ENCODE measurements at regions of chr16 and their contacts with region 1.

Region 1: DNA sequence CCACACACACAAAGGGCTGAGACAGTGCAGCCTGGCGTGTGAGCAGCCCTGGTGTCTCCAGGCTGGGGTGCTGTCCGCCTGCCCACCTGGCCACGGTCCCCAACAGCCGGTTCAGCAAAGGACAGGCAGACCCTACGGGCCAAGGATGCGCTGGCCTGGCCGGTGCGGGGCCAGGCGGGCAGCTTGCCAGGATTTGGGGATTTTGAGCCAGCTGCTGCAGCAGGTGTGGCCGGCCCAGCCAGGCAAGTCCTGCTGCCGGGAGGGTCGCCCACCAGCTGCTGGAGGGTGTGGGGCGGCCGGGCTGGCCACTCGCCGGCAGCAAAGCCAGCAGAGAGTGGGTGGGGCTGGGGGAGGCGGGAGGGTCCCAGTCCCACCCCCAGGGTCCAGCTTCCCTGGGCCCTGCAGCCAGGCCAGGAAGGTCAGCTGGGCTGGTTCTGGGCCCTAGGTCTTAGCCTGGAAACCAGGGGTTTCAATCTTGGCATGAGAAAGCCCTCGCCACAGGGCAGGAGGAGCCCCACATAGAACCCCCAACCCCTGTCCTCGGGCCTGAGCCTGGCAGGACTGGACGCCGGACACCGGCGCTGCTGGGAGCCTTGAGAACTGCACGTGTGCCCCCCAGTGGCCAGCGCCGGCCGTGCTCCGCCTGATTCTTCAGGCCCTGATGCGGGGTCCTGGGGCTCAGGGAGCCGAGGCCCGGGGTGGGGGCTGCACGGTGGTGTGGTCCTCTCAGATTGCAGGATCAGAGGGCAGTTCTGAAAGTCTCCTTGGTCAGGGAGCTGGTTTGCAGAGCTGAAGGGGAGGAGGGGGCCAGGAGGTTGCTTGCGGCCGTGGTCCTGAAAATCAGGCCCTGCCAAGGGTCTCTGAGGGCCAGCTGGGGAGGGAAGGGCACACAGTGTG is 17.6 kb upstream of the SSTR5 start:
- DNase-seq: peak; percentile 59 to 69
- ATAC-seq: peak; percentile 61 to 85 (median 75)
- H3K4me3 ChIP-seq: no peak overlapping the region
- H3K27ac ChIP-seq: no peak overlapping the region
- H3K4me1 ChIP-seq: peaks cover 0 to 7% (median 0%) of the 10 kb centered on the region in 9 donors
- H3K27me3 ChIP-seq: peaks cover 0 to 51% (median 20%) of the 10 kb centered on the region in 7 donors
- CTCF ChIP-seq: peak; percentile 66 to 92 (median 83)

Region 2: GRCh38 chr16:813204-813915 is 241.5 kb before region 1 on chr16:
- intact Hi-C with region 1: loop called (anchors 1 to 5 kb)
- DNase-seq: peak in 1 of 2 donors; percentile 60
- ATAC-seq: peak; percentile 51 to 83 (median 67)
- H3K4me3 ChIP-seq: peak overlapping the region in 7 of 10 donors; percentile 12 to 34 (median 23)
- H3K27ac ChIP-seq: no peak overlapping the region
- H3K4me1 ChIP-seq: peaks cover 0 to 16% (median 5%) of the 10 kb centered on the region in 9 donors
- H3K27me3 ChIP-seq: peaks cover 7 to 69% (median 63%) of the 10 kb centered on the region in 7 donors
- CTCF ChIP-seq: peak; percentile 31 to 75 (median 67)

Region 3: GRCh38 chr16:1026057-1026783 is 28.7 kb before region 1 on chr16:
- intact Hi-C with region 1: no loop called
- DNase-seq: no peak
- ATAC-seq: no peak
- H3K4me3 ChIP-seq: no peak overlapping the region
- H3K27ac ChIP-seq: no peak overlapping the region
- H3K4me1 ChIP-seq: peaks cover 0 to 37% (median 5%) of the 10 kb centered on the region in 9 donors
- H3K27me3 ChIP-seq: peaks cover 6 to 73% (median 62%) of the 10 kb centered on the region in 7 donors
- CTCF ChIP-seq: no peak

Region 4: DNA sequence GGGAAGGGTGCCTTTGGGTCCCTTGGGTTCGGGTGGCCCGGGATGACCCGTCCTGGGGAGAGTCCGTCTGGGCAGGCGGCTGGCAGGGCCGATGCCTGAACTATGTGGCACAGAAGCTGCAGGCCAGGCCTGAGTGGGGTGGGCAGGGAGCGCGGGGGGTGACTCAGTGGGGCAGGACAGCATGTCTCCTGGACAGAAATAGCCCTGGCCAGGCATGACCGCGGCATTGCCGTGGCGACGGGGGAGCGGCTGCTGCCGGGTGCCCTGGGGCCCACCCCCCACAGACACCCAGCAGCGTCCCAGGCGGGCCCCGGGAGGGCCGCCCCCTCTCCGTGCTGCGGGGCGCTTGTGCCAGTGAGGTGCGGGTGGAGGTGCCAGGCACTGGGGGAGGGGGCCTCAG is 42.9 kb after region 1 on chr16:
- intact Hi-C with region 1: loop called in 6 of 10 experiments (anchors 2 kb)
- DNase-seq: peak; percentile 77 to 85
- ATAC-seq: peak; percentile 81 to 95 (median 92)
- H3K4me3 ChIP-seq: no peak overlapping the region
- H3K27ac ChIP-seq: peak overlapping the region; percentile 53 to 89 (median 86)
- H3K4me1 ChIP-seq: peaks cover 11 to 29% (median 22%) of the 10 kb centered on the region in 9 donors
- H3K27me3 ChIP-seq: peaks cover 0 to 40% (median 21%) of the 10 kb centered on the region in 7 donors
- CTCF ChIP-seq: no peak

Region 5: DNA sequence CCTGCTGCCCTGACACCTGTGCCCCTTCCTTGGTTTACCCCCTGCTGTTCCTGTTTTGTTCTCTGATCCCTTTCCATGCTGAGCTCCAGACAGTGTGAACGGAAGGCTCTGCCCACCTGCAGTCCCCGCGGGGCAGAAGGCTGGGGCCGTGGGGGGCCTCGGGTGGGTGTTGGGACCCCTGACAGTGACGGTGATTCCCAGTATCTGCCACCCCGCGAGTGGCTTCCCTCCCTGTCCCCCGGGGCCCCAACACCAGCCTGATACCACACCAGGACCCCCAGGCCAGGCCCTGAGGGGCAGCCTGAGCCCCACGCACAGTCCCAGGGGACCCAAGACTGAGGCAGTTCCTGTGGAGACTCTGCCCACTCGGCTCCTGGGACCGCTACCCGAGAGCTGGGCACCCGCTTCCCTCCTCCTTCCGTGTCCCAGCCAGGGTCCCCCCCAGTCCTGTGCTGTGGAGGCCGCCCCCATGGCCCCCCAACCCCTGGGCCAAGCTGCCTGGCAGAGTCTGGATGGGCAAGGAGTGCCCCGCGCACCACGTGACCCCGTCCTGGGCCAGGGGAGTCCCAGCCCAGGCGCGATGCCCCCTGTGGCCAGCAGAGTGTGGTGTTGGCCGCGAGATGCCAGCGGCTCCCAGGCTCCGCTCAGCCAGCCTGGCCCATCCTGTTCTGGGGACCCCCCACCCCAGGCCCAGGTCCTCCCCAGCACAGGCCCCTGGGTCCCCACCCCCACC is 51.1 kb after region 1 on chr16:
- intact Hi-C with region 1: loop called in 6 of 10 experiments (anchors 1 to 2 kb)
- DNase-seq: peak; percentile 42 to 71
- ATAC-seq: peak; percentile 54 to 84 (median 69)
- H3K4me3 ChIP-seq: no peak overlapping the region
- H3K27ac ChIP-seq: no peak overlapping the region
- H3K4me1 ChIP-seq: peaks cover 0 to 7% (median 5%) of the 10 kb centered on the region in 9 donors
- H3K27me3 ChIP-seq: peaks cover 21 to 91% (median 75%) of the 10 kb centered on the region in 7 donors
- CTCF ChIP-seq: peak; percentile 60 to 82 (median 78)

Region 6: DNA sequence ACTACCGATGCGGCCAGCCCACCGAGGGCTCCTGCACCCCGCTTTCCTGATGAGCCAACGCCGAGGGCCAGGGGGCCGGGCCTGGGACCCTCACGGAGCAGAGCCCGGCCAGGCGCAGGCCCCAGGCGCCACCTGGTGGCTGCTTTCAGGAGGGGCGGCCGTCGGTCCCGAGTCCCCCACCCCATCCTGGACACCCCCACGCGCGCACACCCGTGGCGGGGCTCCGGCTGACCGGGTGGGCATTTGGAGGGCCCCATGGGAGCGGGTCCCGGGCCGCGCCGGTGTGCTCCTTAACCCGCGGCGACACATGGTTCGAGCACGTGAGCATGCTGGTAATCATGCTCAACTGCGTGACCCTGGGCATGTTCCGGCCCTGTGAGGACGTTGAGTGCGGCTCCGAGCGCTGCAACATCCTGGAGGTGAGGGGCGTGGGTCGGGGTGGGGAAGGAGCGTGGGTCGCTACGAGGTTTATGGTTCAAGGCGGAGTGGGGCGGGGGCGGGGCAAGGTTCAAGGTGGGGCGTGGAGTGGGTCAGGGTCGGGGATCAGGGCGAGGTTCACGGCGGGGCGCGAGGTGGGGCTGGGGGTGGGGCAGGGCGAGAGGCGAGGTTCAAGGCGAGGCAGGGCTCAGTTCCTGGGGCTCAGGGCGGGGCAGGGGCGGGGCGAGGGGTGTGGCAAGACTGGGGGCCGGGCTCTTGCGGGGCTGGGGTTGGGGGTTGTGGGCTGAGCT is 139.9 kb after region 1 on chr16:
- intact Hi-C with region 1: loop called in 1 of 10 experiments (anchors 5 kb)
- DNase-seq: no peak
- ATAC-seq: peak in 6 of 8 donors; percentile 20 to 40 (median 26)
- H3K4me3 ChIP-seq: no peak overlapping the region
- H3K27ac ChIP-seq: no peak overlapping the region
- H3K4me1 ChIP-seq: peaks cover 0 to 4% (median 0%) of the 10 kb centered on the region in 9 donors
- H3K27me3 ChIP-seq: peaks cover 0 to 23% (median 8%) of the 10 kb centered on the region in 7 donors
- CTCF ChIP-seq: peak; percentile 61 to 85 (median 74)

Measured in heart right ventricle (tissue), 16 donors.